ENCODE measurements at regions of chr2 and their contacts with region 1.

Region 1: GRCh38 chr2:62705007-62705829 is at the start of gene EHBP1:
- DNase-seq: peak; percentile 100
- H3K4me3 Mint-ChIP-seq: peak within 1 kb of the TSS; percentile 84
- H3K27ac Mint-ChIP-seq: peak within 1 kb of the TSS; percentile 46
- H3K4me1 Mint-ChIP-seq: peaks cover 27% of the 10 kb centered on the region
- H3K27me3 Mint-ChIP-seq: peaks cover 12% of the 10 kb centered on the region
- total RNA-seq, gene EHBP1: 23.9 and 27.4 TPM in 2 replicates

Region 2: DNA sequence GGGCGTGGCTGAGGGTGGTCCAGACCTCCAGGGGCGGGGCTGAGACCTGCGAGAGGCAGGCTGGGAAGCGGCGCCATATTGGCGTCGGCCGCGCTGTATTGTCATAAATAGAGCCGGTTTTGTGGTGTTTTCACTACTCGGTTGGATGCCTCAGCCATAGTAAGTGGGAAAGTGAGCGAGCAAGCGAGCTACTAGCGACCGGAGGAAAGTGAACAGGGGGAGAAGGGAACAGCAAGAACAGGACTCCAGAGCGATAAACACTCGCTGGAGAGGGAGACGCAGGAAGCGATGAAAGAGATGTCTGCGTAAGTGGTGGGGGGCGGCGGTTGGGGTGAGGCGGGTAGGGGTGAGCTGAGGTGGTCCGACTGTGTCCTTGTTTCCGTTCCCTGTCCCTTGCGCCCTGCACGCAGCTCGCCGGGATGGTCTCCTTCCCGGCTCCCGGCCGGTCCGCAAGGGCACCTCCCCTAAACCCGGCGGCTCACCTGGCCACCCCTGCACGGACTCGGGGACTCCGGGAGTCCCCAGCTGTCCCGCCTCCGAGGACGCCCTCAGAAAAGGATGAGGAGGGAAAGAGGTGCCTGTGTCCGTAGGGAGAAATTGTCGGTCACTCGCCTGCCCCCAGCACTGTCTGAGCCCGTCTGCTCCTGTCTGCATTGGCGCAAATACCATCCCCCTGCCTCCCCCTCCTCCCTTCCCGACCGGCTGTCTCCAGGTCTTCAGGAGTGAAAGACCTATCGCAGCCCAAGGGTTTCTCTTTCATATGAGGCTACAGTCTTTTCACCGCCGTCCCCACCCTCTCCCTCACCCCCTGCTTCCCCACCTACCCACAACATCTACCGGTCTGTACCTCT is 1948.8 kb before region 1 on chr2 and contains the start of gene PAPOLG:
- intact Hi-C with region 1: loop called (anchors 5 kb)
- DNase-seq: peak; percentile 99
- H3K4me3 Mint-ChIP-seq: peak within 1 kb of the TSS; percentile 97
- H3K27ac Mint-ChIP-seq: peak within 1 kb of the TSS; percentile 99
- H3K4me1 Mint-ChIP-seq: peaks cover 29% of the 10 kb centered on the region
- H3K27me3 Mint-ChIP-seq: no peaks in the 10 kb centered on the region
- total RNA-seq, gene PAPOLG: 18.1 and 21.6 TPM in 2 replicates

Region 3: DNA sequence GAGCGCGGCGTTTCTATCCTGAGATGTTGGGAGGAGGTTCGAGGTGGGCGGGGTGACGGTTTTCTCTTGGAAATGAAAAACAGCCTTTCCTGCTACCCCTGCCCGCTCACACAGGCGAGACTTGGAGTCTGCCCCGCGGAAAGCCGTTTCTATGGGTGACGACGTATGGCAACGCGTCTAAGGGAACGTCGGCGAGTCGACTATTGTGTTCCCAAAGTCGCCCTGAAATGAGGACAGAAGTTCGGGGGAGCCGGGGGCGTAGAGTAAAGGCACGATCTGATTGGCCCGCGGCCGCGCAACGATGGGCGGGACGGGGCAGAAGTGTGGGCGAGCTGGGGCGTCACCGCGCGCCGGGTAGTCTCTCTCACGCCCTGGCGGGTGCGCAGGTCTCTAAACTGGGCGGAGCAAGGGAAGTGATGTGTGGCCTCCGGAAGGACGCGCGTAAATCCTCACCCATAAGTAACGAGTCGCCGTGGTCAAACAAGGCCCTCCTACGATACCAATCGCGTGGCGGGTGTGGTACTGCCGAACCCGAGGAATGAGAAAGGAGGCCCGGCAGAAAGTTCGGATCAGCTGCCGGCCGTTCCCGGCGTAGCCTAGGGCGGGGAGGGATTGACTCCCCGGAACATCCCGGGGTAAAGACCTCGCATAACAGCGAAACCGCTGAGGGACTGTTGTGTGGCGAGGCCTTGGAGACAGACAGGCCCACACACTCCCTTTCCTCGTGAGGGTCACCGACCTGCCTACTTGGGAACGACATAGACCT is 941.0 kb before region 1 on chr2:
- intact Hi-C with region 1: loop called (anchors 10 kb)
- DNase-seq: peak; percentile 99
- H3K4me3 Mint-ChIP-seq: peak overlapping the region; percentile 95
- H3K27ac Mint-ChIP-seq: peak overlapping the region; percentile 97
- H3K4me1 Mint-ChIP-seq: peaks cover 12% of the 10 kb centered on the region
- H3K27me3 Mint-ChIP-seq: peaks cover 1% of the 10 kb centered on the region

Region 4: DNA sequence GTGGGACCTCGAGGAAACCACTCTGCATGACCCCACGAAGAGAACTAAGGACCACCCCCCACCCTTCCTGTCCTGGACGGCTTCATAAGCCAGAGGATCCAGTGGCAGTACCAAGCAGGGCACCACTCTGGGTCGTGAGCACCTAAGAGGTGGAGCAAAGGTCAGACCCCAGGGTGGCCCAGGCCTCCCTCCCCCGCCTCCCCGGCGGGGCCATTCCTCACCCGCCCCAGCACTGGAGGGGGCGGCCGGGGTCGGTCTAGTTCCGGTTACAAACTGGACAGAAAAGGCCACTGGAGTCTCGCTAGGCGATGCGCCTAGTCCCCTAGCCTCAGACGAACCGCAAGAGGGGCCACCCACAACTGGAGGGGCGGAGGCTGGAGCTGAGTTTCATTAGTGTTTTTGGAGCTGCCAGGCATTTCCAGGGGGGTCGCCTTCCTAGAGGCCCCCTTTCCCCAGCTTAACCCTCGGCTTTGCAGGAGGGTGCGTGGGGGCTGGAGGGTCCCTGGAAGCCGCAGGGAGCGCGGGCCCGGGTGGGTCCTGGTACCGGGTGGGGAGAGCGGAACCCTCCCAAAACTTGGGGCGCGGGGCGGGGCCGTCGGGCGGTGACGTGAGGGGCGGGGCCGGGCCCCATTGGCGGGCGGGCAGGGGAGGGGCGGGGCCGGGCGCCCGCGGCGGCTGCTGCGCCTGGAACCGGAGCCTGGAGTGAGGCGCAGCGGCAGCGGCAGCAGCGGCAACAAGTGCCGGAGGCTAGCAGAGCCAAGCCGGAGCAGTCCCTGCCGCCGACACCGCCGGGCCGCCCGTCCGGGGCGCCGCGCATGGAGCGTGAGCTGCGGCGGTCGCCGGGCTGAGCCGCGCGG is 509.6 kb before region 1 on chr2 and contains the start of gene B3GNT2:
- intact Hi-C with region 1: loop called (anchors 5 kb)
- DNase-seq: peak; percentile 94
- H3K4me3 Mint-ChIP-seq: peak within 1 kb of the TSS; percentile 89
- H3K27ac Mint-ChIP-seq: peak within 1 kb of the TSS; percentile 92
- H3K4me1 Mint-ChIP-seq: peaks cover 34% of the 10 kb centered on the region
- H3K27me3 Mint-ChIP-seq: peaks cover 5% of the 10 kb centered on the region
- total RNA-seq, gene B3GNT2: 30.4 and 30.9 TPM in 2 replicates

Region 5: GRCh38 chr2:62505750-62506420 is 199.3 kb before region 1 on chr2 and contains the start of gene TMEM17:
- intact Hi-C with region 1: loop called (anchors 1 kb)
- DNase-seq: peak; percentile 74
- H3K4me3 Mint-ChIP-seq: peak within 1 kb of the TSS; percentile 82
- H3K27ac Mint-ChIP-seq: peak within 1 kb of the TSS; percentile 54
- H3K4me1 Mint-ChIP-seq: peaks cover 8% of the 10 kb centered on the region
- H3K27me3 Mint-ChIP-seq: peaks cover 35% of the 10 kb centered on the region
- total RNA-seq, gene TMEM17: 0.14 and 0.19 TPM in 2 replicates

Region 6: DNA sequence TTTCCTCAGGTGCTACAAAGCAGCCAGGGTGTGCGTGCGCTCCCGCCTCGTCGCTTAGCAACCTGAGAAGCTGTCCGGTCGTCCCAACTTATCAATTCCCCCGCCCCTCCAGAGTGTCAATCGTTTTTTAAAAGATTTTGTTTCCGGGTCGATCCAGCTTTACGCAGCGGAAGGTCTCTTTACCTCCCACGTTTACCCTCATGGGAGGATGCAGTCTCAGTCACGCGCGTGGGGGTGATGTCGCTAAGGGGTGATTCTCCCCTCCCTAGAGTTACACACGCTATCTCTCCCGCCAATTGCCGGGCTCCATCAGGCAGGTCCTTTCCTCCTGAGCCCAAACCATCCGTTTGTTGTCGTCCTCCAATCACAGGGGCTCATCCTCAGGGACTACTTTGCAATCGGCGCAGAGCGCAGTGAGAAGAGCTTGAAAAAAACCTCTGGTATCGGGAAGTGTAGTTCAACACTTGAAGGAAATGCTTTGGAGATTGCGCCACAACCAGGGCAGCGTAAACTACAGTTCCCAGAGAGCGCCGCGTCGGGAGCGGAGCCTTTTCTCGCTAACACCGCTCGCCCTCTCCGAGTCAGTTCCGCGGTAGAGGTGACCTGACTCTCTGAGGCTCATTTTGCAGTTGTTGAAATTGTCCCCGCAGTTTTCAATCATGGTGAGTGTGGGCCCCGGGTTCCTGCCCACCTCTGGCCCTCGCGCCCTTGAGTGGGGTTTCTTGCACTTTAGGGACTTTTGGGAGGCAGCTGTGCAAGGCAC is 883.3 kb after region 1 on chr2 and contains the starts of genes MDH1 and WDPCP:
- intact Hi-C with region 1: loop called (anchors 5 kb)
- DNase-seq: peak; percentile 97
- H3K4me3 Mint-ChIP-seq: peak within 1 kb of the TSS; percentile 98
- H3K27ac Mint-ChIP-seq: peak within 1 kb of the TSS; percentile 92
- H3K4me1 Mint-ChIP-seq: peaks cover 32% of the 10 kb centered on the region
- H3K27me3 Mint-ChIP-seq: no peaks in the 10 kb centered on the region
- total RNA-seq, gene MDH1: 195 and 208 TPM in 2 replicates
- total RNA-seq, gene WDPCP: 6.0 and 8.9 TPM in 2 replicates